GM18951 (cell line): ENCODE measurements at regions of chr3 and their contacts with region 1.

Region 1: DNA sequence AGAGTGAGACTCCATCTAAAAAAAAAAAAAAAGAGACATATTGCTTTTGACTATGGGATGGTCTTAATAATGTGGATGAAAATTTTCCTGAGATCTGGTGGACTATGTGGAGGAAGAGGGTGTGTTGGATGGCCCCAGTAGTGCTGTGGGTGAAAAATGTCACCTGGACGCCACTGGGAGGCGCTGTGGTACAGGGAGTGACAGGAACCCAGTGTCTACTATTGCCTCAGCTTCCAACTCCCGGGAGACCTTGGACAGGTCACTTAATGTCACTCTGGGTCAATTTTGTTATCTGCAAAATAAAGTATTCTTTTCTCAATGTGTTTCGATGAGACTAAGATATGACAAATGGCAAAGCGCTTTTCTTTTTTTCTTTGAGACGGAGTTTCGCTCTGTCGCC is 27.7 kb upstream of the DCP1A start:
- POLR2A ChIP-seq: no peak

Region 2: DNA sequence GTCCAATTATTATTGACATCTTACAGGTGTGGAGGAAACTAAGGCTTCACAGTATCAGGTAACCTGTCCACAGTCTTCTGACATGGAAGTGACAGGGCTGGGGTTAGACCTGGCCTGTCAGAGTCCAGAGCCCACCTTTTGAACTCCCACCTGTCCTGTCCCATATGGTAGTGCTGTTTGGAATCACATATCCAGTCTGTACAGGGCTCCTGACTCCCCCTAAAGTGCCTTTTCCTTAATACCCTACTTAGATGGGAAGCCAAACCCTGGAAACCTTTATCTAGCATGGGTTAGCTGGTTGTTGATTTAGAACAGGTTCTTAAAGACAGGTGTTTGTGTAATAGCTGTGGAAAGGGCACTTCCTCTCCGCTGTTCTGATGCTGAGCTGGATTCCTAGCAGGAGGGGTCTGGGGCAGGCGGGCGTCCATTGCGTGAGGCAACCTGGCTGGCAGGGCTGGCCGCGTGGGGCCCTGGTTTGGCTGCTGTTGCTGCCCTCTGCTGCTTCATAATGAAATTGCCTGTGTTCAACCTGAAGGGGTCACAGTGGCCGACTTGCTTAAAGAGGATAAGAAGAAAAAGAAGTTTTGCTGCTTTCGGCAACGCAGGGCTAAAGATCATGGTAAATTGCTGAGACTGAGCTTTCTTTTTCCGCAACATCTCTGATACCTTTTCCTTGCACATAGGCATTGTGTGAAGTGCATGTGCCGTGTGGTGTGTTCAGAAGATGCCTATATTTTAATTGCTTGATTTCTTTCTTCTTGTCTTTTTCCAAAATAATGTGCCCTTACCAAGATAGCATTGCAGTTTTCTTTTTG is 335.0 kb after region 1 on chr3:
- in situ Hi-C with region 1: loop called (anchors 10 kb)
- POLR2A ChIP-seq: no peak